AG04450 (cell line): ENCODE measurements at regions of chr18 and their contacts with region 1.

Region 1: GRCh38 chr18:22800551-22800951 is 132.6 kb upstream of the RBBP8 start:
- DNase-seq: no peak
- H3K4me3 ChIP-seq: no peak overlapping the region
- H3K27ac ChIP-seq: no peak overlapping the region
- H3K27me3 ChIP-seq: no peaks in the 10 kb centered on the region
- CTCF ChIP-seq: no peak

Region 2: DNA sequence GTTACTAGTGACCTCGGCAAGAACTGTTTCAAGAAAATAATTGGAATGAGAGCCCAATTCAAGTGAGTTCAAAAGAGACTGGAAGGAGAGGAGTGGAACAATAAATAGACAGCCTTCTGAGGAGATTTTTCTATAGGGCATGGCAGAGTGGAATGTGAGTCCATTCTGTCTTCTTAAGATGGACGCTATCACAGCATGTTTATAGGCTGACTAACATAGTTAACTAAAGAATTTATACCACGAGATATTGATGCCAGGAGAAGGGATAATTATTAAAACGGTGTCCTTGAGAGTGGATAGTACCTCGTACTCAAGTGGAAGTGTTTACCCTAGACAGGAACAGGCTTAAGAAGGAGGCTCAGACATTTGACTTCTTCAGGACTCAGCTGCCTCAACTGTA is 11.0 kb before region 1 on chr18:
- CTCF ChIA-PET with region 1: interaction called, 12 read pairs
- POLR2A ChIA-PET with region 1: no interaction called
- DNase-seq: no peak
- H3K4me3 ChIP-seq: no peak overlapping the region
- H3K27ac ChIP-seq: no peak overlapping the region
- H3K27me3 ChIP-seq: peaks cover 11% of the 10 kb centered on the region
- CTCF ChIP-seq: no peak

Region 3: DNA sequence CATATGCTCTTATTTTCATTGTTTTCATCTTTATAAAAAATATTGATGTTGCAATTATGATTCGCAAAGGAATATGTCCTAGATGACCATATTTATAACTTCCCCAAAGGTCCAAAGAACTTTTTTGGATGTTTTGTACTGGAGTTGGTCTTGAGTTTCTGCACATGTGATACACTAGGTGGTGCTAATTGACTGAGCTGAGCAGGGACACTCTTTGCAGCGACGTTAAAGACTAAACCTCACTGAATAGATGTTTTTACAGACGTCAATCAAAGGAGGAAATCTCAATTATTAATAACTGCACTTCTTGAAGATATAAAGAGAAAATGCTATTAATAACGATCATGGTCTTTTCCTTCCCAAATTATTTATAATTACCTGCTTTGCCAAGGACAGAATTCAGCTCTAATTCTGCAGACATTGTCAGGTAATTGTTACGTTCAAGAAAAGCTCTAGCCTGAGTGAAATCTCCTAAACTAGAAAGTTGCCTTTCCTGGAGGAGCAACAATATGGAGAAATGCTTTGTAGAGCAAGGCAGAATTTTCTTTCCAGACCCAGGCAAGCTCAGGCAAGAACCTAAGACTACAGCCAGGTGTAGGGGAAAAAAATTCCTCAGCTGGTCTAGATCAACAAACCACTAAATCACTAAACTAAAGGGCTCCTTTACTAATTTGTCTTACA is 13.2 kb after region 1 on chr18:
- CTCF ChIA-PET with region 1: interaction called, 11 read pairs
- POLR2A ChIA-PET with region 1: no interaction called
- DNase-seq: no peak
- H3K4me3 ChIP-seq: no peak overlapping the region
- H3K27ac ChIP-seq: no peak overlapping the region
- H3K27me3 ChIP-seq: peaks cover 5% of the 10 kb centered on the region
- CTCF ChIP-seq: peak; percentile 84

Region 4: DNA sequence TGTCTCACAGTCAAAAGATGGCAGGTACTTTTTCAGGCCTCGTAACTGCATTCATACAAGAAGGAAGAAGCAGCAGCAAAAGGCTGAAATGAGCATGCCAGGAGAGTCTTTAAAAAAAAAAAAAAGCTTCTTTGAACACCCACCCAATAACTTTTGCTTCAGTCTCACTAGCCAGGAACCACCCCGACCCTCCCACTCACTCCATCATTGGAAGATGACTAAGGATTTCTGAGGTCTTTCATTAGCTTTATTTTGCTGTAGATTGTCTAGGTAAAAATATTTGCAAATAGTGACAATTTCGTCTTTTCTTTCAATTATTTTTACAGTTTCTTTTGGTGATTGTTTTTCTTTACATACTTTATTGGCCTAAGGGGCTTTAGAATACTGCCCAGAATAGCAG is 170.5 kb after region 1 on chr18:
- CTCF ChIA-PET with region 1: interaction called, 13 read pairs
- POLR2A ChIA-PET with region 1: no interaction called
- DNase-seq: no peak
- H3K4me3 ChIP-seq: no peak overlapping the region
- H3K27ac ChIP-seq: no peak overlapping the region
- H3K27me3 ChIP-seq: no peaks in the 10 kb centered on the region
- CTCF ChIP-seq: no peak

Region 5: GRCh38 chr18:22983175-22983574 is 182.6 kb after region 1 on chr18:
- CTCF ChIA-PET with region 1: interaction called, 24 read pairs
- POLR2A ChIA-PET with region 1: no interaction called
- DNase-seq: peak; percentile 8
- H3K4me3 ChIP-seq: no peak overlapping the region
- H3K27ac ChIP-seq: no peak overlapping the region
- H3K27me3 ChIP-seq: no peaks in the 10 kb centered on the region
- CTCF ChIP-seq: peak; percentile 62

Region 6: GRCh38 chr18:23281626-23282436 is 481.3 kb after region 1 on chr18:
- CTCF ChIA-PET with region 1: no interaction called
- POLR2A ChIA-PET with region 1: no interaction called
- DNase-seq: no peak
- H3K4me3 ChIP-seq: no peak overlapping the region
- H3K27ac ChIP-seq: no peak overlapping the region
- H3K27me3 ChIP-seq: no peaks in the 10 kb centered on the region
- CTCF ChIP-seq: no peak